GM10248 (cell line): ENCODE measurements at regions of chr2 and their contacts with region 1.

Region 1: GRCh38 chr2:8421658-8422449 is 260.0 kb upstream of the ID2 start:
- DNase-seq: peak; percentile 66
- CTCF ChIP-seq: peak; percentile 43

Region 2: GRCh38 chr2:8481463-8482009 is 59.7 kb after region 1 on chr2:
- CTCF ChIA-PET with region 1: interaction called, 10 read pairs
- POLR2A ChIA-PET with region 1: no interaction called
- DNase-seq: no peak
- CTCF ChIP-seq: no peak